CD8-positive, alpha-beta T cell (primary cell): ENCODE measurements at regions of chr4 and their contacts with region 1.

Region 1: GRCh38 chr4:86924811-86925210 is 10.0 kb upstream of the AFF1 start:
- DNase-seq: no peak
- ATAC-seq: no peak
- H3K4me3 ChIP-seq: no peak overlapping the region
- H3K4me3 Mint-ChIP-seq: no peak overlapping the region
- H3K27ac ChIP-seq: no peak overlapping the region
- H3K27ac Mint-ChIP-seq: no peak overlapping the region
- H3K4me1 ChIP-seq: no peaks in the 10 kb centered on the region
- H3K4me1 Mint-ChIP-seq: peaks cover 2% of the 10 kb centered on the region
- H3K27me3 ChIP-seq: no peaks in the 10 kb centered on the region
- H3K27me3 Mint-ChIP-seq: no peaks in the 10 kb centered on the region
- CTCF ChIP-seq: no peak

Region 2: DNA sequence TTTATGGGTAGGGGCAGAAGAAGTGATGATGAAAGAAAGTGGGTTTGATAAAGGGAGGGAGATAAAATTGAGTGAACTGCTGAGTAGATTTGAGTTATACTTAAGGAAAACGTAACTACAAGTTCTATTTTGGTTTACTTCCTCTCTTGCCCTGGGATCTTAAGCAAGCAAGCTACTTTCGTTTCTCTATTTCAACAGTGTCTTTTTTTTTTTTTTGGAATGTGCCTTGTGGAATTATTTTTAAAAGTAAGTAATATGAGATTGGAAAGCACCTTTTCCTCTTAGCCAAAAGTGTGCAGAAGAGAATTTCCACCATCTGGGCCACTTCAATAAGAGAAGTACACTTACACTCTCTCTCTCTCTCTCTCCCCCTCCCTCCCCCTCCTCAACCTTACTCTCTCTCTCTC is 16.6 kb before region 1 on chr4:
- CTCF ChIA-PET with region 1: interaction called, 14 read pairs
- POLR2A ChIA-PET with region 1: interaction called, 3 read pairs
- intact Hi-C with region 1: no loop called
- DNase-seq: peak in 1 of 9 experiments; percentile 14
- ATAC-seq: no peak
- H3K4me3 ChIP-seq: no peak overlapping the region
- H3K4me3 Mint-ChIP-seq: peak overlapping the region; percentile 55
- H3K27ac ChIP-seq: no peak overlapping the region
- H3K27ac Mint-ChIP-seq: no peak overlapping the region
- H3K4me1 ChIP-seq: peaks cover 7% of the 10 kb centered on the region
- H3K4me1 Mint-ChIP-seq: peaks cover 15% of the 10 kb centered on the region
- H3K27me3 ChIP-seq: no peaks in the 10 kb centered on the region
- H3K27me3 Mint-ChIP-seq: peaks cover 7% of the 10 kb centered on the region
- CTCF ChIP-seq: no peak

Region 3: GRCh38 chr4:87006676-87007527 is 82.1 kb after region 1 on chr4:
- CTCF ChIA-PET with region 1: interaction called, 29 read pairs
- POLR2A ChIA-PET with region 1: interaction called, 12 read pairs
- intact Hi-C with region 1: loop called in 1 of 2 experiments (anchors 1 kb)
- DNase-seq: peak; percentile 83 to 95 (median 89)
- ATAC-seq: peak; percentile 81
- H3K4me3 ChIP-seq: peak overlapping the region; percentile 75 to 91
- H3K4me3 Mint-ChIP-seq: peak overlapping the region; percentile 91
- H3K27ac ChIP-seq: peak overlapping the region; percentile 83 to 95
- H3K27ac Mint-ChIP-seq: peak overlapping the region; percentile 96
- H3K4me1 ChIP-seq: peaks cover 43% of the 10 kb centered on the region
- H3K4me1 Mint-ChIP-seq: peaks cover 53% of the 10 kb centered on the region
- H3K27me3 ChIP-seq: no peaks in the 10 kb centered on the region
- H3K27me3 Mint-ChIP-seq: no peaks in the 10 kb centered on the region
- CTCF ChIP-seq: no peak

Region 4: DNA sequence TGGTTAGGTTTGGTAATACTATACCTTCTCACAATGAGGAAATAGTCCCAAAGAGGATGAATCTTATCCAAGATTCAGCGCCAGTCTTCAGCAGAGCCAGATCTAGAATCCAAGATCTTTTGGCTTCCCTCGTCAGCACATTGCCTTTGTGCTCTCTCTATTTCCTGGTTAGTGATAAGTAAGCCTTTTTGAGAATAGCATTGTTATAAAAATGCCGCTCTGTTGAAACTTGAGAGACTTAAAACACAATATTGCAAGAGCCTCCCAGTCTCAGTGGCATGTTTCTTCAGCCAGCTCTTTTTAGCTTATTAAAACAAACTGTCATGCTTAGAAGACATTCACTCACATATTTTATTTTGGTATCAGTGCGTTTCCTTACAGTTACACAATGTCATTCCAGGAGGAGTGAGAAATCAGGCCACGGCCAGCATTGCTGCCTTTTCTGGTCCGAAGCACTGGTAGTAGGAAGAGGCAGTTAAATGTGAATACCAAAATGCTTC is 154.2 kb after region 1 on chr4:
- CTCF ChIA-PET with region 1: interaction called, 20 read pairs
- POLR2A ChIA-PET with region 1: interaction called, 4 read pairs
- intact Hi-C with region 1: no loop called
- DNase-seq: no peak
- ATAC-seq: no peak
- H3K4me3 ChIP-seq: no peak overlapping the region
- H3K4me3 Mint-ChIP-seq: no peak overlapping the region
- H3K27ac ChIP-seq: no peak overlapping the region
- H3K27ac Mint-ChIP-seq: no peak overlapping the region
- H3K4me1 ChIP-seq: peaks cover 6% of the 10 kb centered on the region
- H3K4me1 Mint-ChIP-seq: peaks cover 40% of the 10 kb centered on the region
- H3K27me3 ChIP-seq: no peaks in the 10 kb centered on the region
- H3K27me3 Mint-ChIP-seq: no peaks in the 10 kb centered on the region
- CTCF ChIP-seq: no peak

Region 5: GRCh38 chr4:87103691-87104187 is 178.9 kb after region 1 on chr4:
- CTCF ChIA-PET with region 1: interaction called, 114 read pairs
- POLR2A ChIA-PET with region 1: no interaction called
- intact Hi-C with region 1: no loop called
- DNase-seq: peak in 2 of 9 experiments; percentile 45 to 69
- ATAC-seq: peak; percentile 79
- H3K4me3 ChIP-seq: no peak overlapping the region
- H3K4me3 Mint-ChIP-seq: peak overlapping the region; percentile 57
- H3K27ac ChIP-seq: peak overlapping the region; percentile 53 to 68
- H3K27ac Mint-ChIP-seq: peak overlapping the region; percentile 87
- H3K4me1 ChIP-seq: peaks cover 29% of the 10 kb centered on the region
- H3K4me1 Mint-ChIP-seq: peaks cover 46% of the 10 kb centered on the region
- H3K27me3 ChIP-seq: no peaks in the 10 kb centered on the region
- H3K27me3 Mint-ChIP-seq: no peaks in the 10 kb centered on the region
- CTCF ChIP-seq: no peak

Region 6: GRCh38 chr4:87150498-87151261 is 225.9 kb after region 1 on chr4:
- CTCF ChIA-PET with region 1: interaction called, 16 read pairs
- POLR2A ChIA-PET with region 1: interaction called, 3 read pairs
- intact Hi-C with region 1: no loop called
- DNase-seq: peak in 8 of 9 experiments; percentile 17 to 78 (median 40)
- ATAC-seq: peak; percentile 84
- H3K4me3 ChIP-seq: no peak overlapping the region
- H3K4me3 Mint-ChIP-seq: no peak overlapping the region
- H3K27ac ChIP-seq: no peak overlapping the region
- H3K27ac Mint-ChIP-seq: no peak overlapping the region
- H3K4me1 ChIP-seq: no peaks in the 10 kb centered on the region
- H3K4me1 Mint-ChIP-seq: no peaks in the 10 kb centered on the region
- H3K27me3 ChIP-seq: no peaks in the 10 kb centered on the region
- H3K27me3 Mint-ChIP-seq: no peaks in the 10 kb centered on the region
- CTCF ChIP-seq: peak; percentile 91